Natural killer cell (primary cell): ENCODE measurements at regions of chr21 and their contacts with region 1.

Region 1: DNA sequence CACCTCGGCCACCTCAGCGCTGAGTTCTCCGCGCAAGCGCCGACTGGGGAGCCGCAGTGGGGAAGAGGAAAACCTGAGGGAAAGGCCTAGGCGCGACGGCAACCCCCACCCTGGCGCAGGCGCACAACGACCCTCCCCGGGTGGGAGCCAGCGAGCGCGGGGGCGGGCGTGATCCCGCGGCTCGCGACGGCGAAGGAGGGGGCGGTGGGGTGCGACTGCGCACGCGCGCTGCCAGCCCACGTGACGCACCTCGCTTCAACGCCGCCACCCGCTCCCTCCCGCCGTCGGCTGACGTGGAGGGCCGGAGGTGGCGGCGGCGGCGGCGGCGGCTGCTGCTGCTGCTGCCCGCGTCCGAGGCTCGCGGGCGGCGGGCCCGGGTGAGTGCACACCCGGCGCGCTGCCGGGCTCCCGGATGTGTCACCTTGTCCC is at the starts of genes PIGP and TTC3:
- DNase-seq: peak; percentile 96 to 99
- ATAC-seq: peak; percentile 69 to 86 (median 77)
- H3K4me3 ChIP-seq: peak within 1 kb of the TSS; percentile 96
- H3K4me3 Mint-ChIP-seq: peak within 1 kb of the TSS; percentile 97
- H3K27ac ChIP-seq: peak within 1 kb of the TSS; percentile 100
- H3K27ac Mint-ChIP-seq: peak within 1 kb of the TSS; percentile 93 to 98
- H3K4me1 ChIP-seq: peaks cover 17% of the 10 kb centered on the region
- H3K4me1 Mint-ChIP-seq: peaks cover 29 to 37% of the 10 kb centered on the region in 2 donors
- H3K27me3 ChIP-seq: no peaks in the 10 kb centered on the region
- H3K27me3 Mint-ChIP-seq: no peaks in the 10 kb centered on the region
- CTCF ChIP-seq: no peak
- total RNA-seq, gene PIGP: 6.5 to 10.4 (median 8.5) TPM
- total RNA-seq, gene TTC3: 83.1 to 97.4 (median 88.3) TPM

Region 2: GRCh38 chr21:36989699-36990507 is 83.1 kb before region 1 on chr21:
- intact Hi-C with region 1: loop called (anchors 5 kb)
- DNase-seq: peak; percentile 86 to 93
- ATAC-seq: peak; percentile 89 to 94 (median 90)
- H3K4me3 ChIP-seq: peak overlapping the region; percentile 54
- H3K4me3 Mint-ChIP-seq: peak overlapping the region; percentile 88
- H3K27ac ChIP-seq: peak overlapping the region; percentile 77
- H3K27ac Mint-ChIP-seq: peak overlapping the region; percentile 87 to 94
- H3K4me1 ChIP-seq: peaks cover 18% of the 10 kb centered on the region
- H3K4me1 Mint-ChIP-seq: peaks cover 10 to 11% of the 10 kb centered on the region in 2 donors
- H3K27me3 ChIP-seq: no peaks in the 10 kb centered on the region
- H3K27me3 Mint-ChIP-seq: no peaks in the 10 kb centered on the region
- CTCF ChIP-seq: peak; percentile 96

Region 3: DNA sequence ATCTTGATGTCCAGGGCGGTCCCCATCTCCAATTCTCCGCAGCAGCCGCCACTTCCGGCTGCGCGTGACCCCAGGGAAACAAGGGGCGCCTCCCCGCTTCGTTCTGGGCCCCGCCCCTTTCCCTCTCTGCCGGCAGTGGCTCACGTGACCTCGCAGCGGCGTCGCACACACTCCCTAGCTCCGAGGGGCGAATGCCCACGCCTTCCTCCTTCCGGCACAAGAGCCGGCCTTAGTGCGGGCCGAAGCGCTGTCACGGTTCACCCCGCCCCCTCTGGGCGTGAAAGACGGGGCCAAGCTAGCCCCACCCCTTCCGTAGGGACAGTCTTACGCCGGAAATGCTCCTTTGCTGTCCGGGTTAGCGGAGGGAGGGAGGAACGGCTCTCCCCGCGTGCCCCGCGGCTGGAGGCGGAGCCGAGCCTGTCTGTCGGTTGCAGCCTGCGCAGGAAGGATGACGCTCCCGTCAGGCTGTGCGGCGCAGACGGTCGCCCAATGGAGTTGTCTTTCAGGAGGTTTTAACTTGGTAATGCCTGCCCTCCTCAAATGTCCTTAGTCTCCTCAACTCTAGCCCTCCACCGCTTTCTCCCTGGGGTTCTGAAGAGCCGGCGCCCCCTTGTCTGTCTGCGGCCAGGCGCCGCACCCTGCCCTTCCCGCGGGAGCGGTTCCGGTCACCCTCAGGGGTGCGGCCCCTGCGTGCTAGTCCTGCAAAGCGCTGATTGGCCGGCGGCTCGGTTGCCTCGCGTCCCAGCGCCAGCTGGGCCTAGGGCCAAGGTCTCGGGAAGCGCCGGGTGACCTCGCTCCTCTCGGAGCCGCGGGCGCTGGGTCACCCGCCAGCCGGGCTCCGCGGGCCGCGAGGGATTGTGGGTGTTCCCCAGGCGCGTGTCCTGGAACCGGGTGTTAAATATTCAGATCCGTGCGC is 194.5 kb after region 1 on chr21 and contains the start of gene VPS26C:
- intact Hi-C with region 1: loop called (anchors 2 kb)
- DNase-seq: peak; percentile 94 to 99
- ATAC-seq: peak; percentile 85 to 95 (median 86)
- H3K4me3 ChIP-seq: peak within 1 kb of the TSS; percentile 90
- H3K4me3 Mint-ChIP-seq: peak within 1 kb of the TSS; percentile 97
- H3K27ac ChIP-seq: peak within 1 kb of the TSS; percentile 99
- H3K27ac Mint-ChIP-seq: peak within 1 kb of the TSS; percentile 95 to 99
- H3K4me1 ChIP-seq: peaks cover 22% of the 10 kb centered on the region
- H3K4me1 Mint-ChIP-seq: peaks cover 32 to 52% of the 10 kb centered on the region in 2 donors
- H3K27me3 ChIP-seq: no peaks in the 10 kb centered on the region
- H3K27me3 Mint-ChIP-seq: no peaks in the 10 kb centered on the region
- CTCF ChIP-seq: no peak
- total RNA-seq, gene VPS26C: 71.1 to 84.7 (median 72.2) TPM

Region 4: DNA sequence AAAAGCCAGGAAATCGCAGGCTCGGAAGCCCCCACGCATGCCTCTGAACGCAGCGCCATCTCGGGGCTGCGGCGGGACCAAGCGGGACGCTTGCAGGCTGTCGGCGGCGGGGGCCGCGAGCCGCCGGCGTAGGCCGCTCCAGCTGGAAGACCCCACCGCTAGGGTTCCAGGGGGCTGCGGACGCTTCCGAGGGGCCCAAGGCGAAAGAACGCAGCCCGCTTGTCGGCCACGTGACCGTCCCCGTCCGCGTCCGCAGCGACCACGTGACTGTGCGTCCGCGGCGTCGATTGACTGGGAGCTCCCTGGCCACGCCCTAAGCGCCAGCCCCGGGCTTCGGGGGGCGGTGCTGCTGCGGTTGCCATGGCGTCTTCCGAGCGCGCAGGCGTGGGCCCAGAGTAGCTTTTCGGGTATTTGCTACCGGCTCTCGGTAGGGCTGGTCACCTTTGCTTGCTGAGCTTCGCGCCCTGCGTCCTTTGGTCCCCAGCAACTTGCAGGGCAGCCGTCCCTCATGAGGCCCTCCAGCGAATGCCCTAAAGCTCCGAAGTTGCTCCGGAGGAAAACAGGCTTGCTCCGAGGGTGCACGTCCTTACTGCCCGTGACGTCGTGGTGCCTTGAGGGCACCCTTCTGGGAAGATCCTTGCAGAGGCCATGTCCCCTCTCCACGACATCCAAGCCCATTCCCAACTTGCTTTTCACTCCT is 490.8 kb after region 1 on chr21:
- intact Hi-C with region 1: loop called (anchors 5 kb)
- DNase-seq: peak; percentile 92 to 97
- ATAC-seq: peak; percentile 73 to 94 (median 87)
- H3K4me3 ChIP-seq: peak overlapping the region; percentile 87
- H3K4me3 Mint-ChIP-seq: peak overlapping the region; percentile 97
- H3K27ac ChIP-seq: peak overlapping the region; percentile 95
- H3K27ac Mint-ChIP-seq: peak overlapping the region; percentile 98 to 100
- H3K4me1 ChIP-seq: peaks cover 15% of the 10 kb centered on the region
- H3K4me1 Mint-ChIP-seq: peaks cover 18 to 28% of the 10 kb centered on the region in 2 donors
- H3K27me3 ChIP-seq: no peaks in the 10 kb centered on the region
- H3K27me3 Mint-ChIP-seq: peaks cover 0 to 3% of the 10 kb centered on the region in 2 donors
- CTCF ChIP-seq: peak; percentile 37